ENCODE measurements at regions of chr19 and their contacts with region 1.

Region 1: GRCh38 chr19:45886427-45887199 is 672 bp upstream of the IRF2BP1 start:
- DNase-seq: peak; percentile 87 to 96
- ATAC-seq: peak; percentile 69 to 86 (median 73)
- H3K4me3 ChIP-seq: peak overlapping the region; percentile 72
- H3K4me3 Mint-ChIP-seq: peak overlapping the region; percentile 98
- H3K27ac ChIP-seq: peak overlapping the region; percentile 86
- H3K27ac Mint-ChIP-seq: peak overlapping the region; percentile 96 to 97
- H3K4me1 ChIP-seq: peaks cover 37% of the 10 kb centered on the region
- H3K4me1 Mint-ChIP-seq: peaks cover 17 to 32% of the 10 kb centered on the region in 2 donors
- H3K27me3 ChIP-seq: no peaks in the 10 kb centered on the region
- H3K27me3 Mint-ChIP-seq: peaks cover 0 to 3% of the 10 kb centered on the region in 2 donors
- CTCF ChIP-seq: no peak

Region 2: GRCh38 chr19:45817010-45817724 is 69.4 kb before region 1 on chr19:
- intact Hi-C with region 1: loop called (anchors 1 kb)
- DNase-seq: peak; percentile 93 to 98
- ATAC-seq: peak; percentile 99 to 100 (median 100)
- H3K4me3 ChIP-seq: no peak overlapping the region
- H3K4me3 Mint-ChIP-seq: peak overlapping the region; percentile 59
- H3K27ac ChIP-seq: no peak overlapping the region
- H3K27ac Mint-ChIP-seq: peak overlapping the region in 1 of 2 donors; percentile 29
- H3K4me1 ChIP-seq: peaks cover 27% of the 10 kb centered on the region
- H3K4me1 Mint-ChIP-seq: peaks cover 0 to 10% of the 10 kb centered on the region in 2 donors
- H3K27me3 ChIP-seq: peaks cover 6% of the 10 kb centered on the region
- H3K27me3 Mint-ChIP-seq: peaks cover 0 to 7% of the 10 kb centered on the region in 2 donors
- CTCF ChIP-seq: peak; percentile 100

Region 3: DNA sequence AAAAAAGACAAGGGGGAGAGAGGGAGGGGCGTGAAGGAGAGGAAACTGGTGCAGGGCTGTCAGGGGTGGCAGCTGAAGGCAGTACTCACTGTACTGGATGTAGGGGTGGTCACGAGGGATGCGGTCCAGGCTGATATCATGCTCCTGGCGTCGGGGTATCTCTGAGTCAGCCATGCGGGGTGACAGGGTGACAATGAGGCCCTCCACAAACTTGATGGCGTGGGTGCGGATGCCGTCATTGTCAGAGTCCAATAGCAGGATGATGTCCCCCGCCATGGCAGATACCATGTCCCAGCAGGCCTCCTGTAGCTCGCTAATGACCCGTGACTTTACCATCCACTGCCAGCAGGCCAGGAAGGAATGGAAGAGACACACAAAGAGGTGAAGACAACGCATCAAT is 39.0 kb before region 1 on chr19:
- intact Hi-C with region 1: no loop called
- DNase-seq: no peak
- ATAC-seq: no peak
- H3K4me3 ChIP-seq: no peak overlapping the region
- H3K4me3 Mint-ChIP-seq: no peak overlapping the region
- H3K27ac ChIP-seq: no peak overlapping the region
- H3K27ac Mint-ChIP-seq: no peak overlapping the region
- H3K4me1 ChIP-seq: no peaks in the 10 kb centered on the region
- H3K4me1 Mint-ChIP-seq: peaks cover 0 to 11% of the 10 kb centered on the region in 2 donors
- H3K27me3 ChIP-seq: no peaks in the 10 kb centered on the region
- H3K27me3 Mint-ChIP-seq: no peaks in the 10 kb centered on the region
- CTCF ChIP-seq: no peak

Region 4: GRCh38 chr19:45862564-45863334 is 23.9 kb before region 1 on chr19 and contains the start of gene SYMPK:
- intact Hi-C with region 1: loop called (anchors 1 kb)
- DNase-seq: peak; percentile 96 to 99
- ATAC-seq: peak; percentile 97 to 99 (median 97)
- H3K4me3 ChIP-seq: peak within 1 kb of the TSS; percentile 96
- H3K4me3 Mint-ChIP-seq: peak within 1 kb of the TSS; percentile 99
- H3K27ac ChIP-seq: peak within 1 kb of the TSS; percentile 94
- H3K27ac Mint-ChIP-seq: peak within 1 kb of the TSS; percentile 91 to 96
- H3K4me1 ChIP-seq: peaks cover 24% of the 10 kb centered on the region
- H3K4me1 Mint-ChIP-seq: peaks cover 21 to 43% of the 10 kb centered on the region in 2 donors
- H3K27me3 ChIP-seq: peaks cover 11% of the 10 kb centered on the region
- H3K27me3 Mint-ChIP-seq: peaks cover 16 to 24% of the 10 kb centered on the region in 2 donors
- CTCF ChIP-seq: no peak
- total RNA-seq, gene SYMPK: 86.4 to 94.8 (median 86.7) TPM

Region 5: GRCh38 chr19:45902651-45903625 is 16.3 kb after region 1 on chr19:
- intact Hi-C with region 1: loop called (anchors 1 kb)
- DNase-seq: peak; percentile 99 to 100
- ATAC-seq: peak; percentile 85 to 93 (median 87)
- H3K4me3 ChIP-seq: peak overlapping the region; percentile 56
- H3K4me3 Mint-ChIP-seq: peak overlapping the region; percentile 96
- H3K27ac ChIP-seq: peak overlapping the region; percentile 73
- H3K27ac Mint-ChIP-seq: peak overlapping the region; percentile 83 to 92
- H3K4me1 ChIP-seq: peaks cover 22% of the 10 kb centered on the region
- H3K4me1 Mint-ChIP-seq: peaks cover 0 to 30% of the 10 kb centered on the region in 2 donors
- H3K27me3 ChIP-seq: no peaks in the 10 kb centered on the region
- H3K27me3 Mint-ChIP-seq: peaks cover 0 to 3% of the 10 kb centered on the region in 2 donors
- CTCF ChIP-seq: no peak

Region 6: DNA sequence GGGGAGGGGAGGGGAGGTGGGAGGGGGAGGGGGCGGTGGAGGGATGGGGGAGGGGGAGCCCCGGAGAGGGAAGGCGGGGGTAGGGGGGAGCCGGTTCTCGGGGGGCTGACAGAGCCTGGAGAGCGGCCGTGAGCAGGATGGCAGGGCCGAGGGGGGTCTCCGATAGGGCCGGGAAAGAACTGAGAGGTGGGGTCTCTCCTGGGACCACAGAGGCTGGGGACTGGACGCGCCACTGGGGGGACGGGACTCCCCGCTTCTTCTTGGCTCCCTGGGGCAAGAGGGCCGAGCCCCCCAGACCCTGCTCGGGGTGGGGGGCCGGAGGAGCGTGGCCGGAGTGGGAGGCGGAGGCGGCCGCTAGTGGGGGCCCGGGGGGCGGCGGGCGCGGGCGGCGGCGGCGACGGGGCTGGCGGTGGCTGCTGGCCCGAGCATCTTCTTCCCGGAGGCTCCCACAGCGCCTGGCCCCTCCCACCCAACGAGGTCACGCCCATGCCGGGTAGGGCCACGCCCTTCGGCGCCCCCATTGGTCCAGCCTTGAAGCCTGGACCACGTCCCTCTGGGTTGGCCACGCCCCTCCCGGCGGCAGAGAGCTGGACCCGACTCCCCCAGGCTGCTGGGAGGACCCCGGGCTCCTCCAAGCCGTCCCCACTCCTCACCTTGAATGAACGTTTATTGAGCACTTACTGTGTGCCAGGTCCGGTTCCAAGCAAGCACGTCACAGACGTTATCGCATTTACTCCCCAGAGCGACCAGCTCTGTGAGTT is 87.1 kb after region 1 on chr19 and contains the start of gene NOVA2:
- intact Hi-C with region 1: no loop called
- DNase-seq: peak in 1 of 2 donors; percentile 42
- ATAC-seq: peak in 2 of 3 donors; percentile 41 to 63
- H3K4me3 ChIP-seq: no peak within 1 kb of the TSS
- H3K4me3 Mint-ChIP-seq: peak within 1 kb of the TSS; percentile 49
- H3K27ac ChIP-seq: no peak within 1 kb of the TSS
- H3K27ac Mint-ChIP-seq: peak within 1 kb of the TSS in 1 of 2 donors; percentile 31
- H3K4me1 ChIP-seq: peaks cover 25% of the 10 kb centered on the region
- H3K4me1 Mint-ChIP-seq: peaks cover 8 to 17% of the 10 kb centered on the region in 2 donors
- H3K27me3 ChIP-seq: peaks cover 42% of the 10 kb centered on the region
- H3K27me3 Mint-ChIP-seq: peaks cover 60 to 61% of the 10 kb centered on the region in 2 donors
- CTCF ChIP-seq: no peak
- total RNA-seq, gene NOVA2: not detected